Dendritic cell treated with granulocyte-macrophage colony-stimulating factor and Interleukin-4, amounts not matched to agents 40 ng/mL and 50 ng/mL, for 4 days (primary cell): ENCODE measurements at regions of chr19 and their contacts with region 1.

Region 1: GRCh38 chr19:33143897-33144405 is 12.0 kb downstream of the WDR88 start:
- H3K4me3 Mint-ChIP-seq: peak overlapping the region; percentile 54
- H3K27ac Mint-ChIP-seq: peak overlapping the region; percentile 35
- H3K4me1 Mint-ChIP-seq: peaks cover 14% of the 10 kb centered on the region
- H3K27me3 Mint-ChIP-seq: peaks cover 7% of the 10 kb centered on the region

Region 2: GRCh38 chr19:33110137-33110910 is 33.6 kb before region 1 on chr19:
- intact Hi-C with region 1: no loop called
- H3K4me3 Mint-ChIP-seq: no peak overlapping the region
- H3K27ac Mint-ChIP-seq: no peak overlapping the region
- H3K4me1 Mint-ChIP-seq: no peaks in the 10 kb centered on the region
- H3K27me3 Mint-ChIP-seq: no peaks in the 10 kb centered on the region

Region 3: DNA sequence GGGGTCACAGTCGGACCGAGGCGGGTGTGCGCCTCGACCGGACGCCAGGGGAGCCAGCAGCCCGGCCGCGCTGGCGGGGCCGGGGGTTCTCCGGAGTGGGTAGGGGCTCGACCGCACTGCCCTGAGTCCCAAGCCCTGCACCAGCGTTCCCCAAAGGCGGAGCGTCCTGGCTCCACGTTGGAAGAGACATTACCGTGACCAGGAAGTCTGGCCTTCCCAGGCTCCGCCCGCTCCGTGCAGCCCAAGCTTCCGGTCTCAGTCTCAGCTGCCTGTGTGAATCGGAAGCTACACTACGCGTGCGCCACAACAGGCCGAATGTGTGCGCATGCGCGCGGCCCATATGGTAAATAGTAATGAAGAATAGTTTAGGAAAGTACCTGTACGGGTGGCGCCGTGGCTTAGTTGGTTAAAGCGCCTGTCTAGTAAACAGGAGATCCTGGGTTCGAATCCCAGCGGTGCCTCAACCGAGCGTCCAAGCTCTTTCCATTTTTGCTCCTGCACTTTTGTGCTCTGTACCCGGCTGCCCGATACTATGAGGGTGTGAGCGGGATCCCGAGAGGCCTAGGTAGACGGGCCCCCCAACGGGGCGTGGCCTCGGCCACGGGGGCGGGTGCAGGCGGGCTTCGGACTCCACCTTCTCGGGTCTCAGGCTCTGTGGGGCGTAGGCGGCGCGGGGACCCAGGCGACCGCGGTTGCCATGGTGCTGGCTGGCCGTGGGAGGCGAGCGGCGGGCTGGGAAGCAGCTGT is 32.9 kb after region 1 on chr19:
- intact Hi-C with region 1: loop called (anchors 2 kb)
- H3K4me3 Mint-ChIP-seq: peak overlapping the region; percentile 93
- H3K27ac Mint-ChIP-seq: peak overlapping the region; percentile 92
- H3K4me1 Mint-ChIP-seq: peaks cover 54% of the 10 kb centered on the region
- H3K27me3 Mint-ChIP-seq: no peaks in the 10 kb centered on the region

Region 4: DNA sequence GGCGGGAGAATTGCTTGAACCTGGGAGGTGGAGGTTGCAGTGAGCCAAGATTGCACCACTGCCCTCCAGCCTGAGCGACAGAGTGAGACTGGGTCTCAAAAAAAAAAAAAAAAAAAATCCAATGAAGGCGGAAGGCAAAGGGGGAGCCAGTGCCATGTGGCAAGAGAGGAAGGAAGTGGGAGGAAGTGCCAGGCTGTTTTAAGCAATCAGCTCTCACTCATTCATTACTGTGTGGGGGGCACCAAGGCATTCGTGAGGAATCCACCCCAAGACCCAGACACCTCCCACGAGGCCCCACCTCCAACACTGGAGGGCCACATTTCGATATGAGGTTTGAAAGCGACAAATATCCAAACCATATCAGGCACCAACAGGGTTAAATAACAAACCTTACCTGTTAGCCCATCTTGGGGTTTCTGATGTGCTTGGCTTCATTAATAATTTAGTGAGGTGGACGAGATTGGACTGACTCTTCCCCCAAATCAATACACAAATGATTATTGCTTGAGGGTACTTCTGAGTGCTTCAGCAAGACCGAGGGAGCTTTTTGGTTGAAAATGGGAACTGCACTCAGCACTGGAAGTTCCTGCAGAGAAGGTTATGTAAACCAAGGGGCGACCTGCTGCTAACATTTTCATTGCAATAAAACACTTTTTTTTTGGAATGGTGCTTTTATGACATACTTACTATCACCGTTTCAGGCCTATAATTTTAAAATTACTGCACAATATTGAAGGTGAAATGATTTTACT is 42.7 kb after region 1 on chr19:
- intact Hi-C with region 1: loop called (anchors 2 kb)
- H3K4me3 Mint-ChIP-seq: no peak overlapping the region
- H3K27ac Mint-ChIP-seq: no peak overlapping the region
- H3K4me1 Mint-ChIP-seq: peaks cover 31% of the 10 kb centered on the region
- H3K27me3 Mint-ChIP-seq: peaks cover under 1% of the 10 kb centered on the region

Region 5: GRCh38 chr19:33771384-33772101 is 627.6 kb after region 1 on chr19:
- intact Hi-C with region 1: loop called (anchors 5 kb)
- H3K4me3 Mint-ChIP-seq: no peak overlapping the region
- H3K27ac Mint-ChIP-seq: no peak overlapping the region
- H3K4me1 Mint-ChIP-seq: no peaks in the 10 kb centered on the region
- H3K27me3 Mint-ChIP-seq: no peaks in the 10 kb centered on the region